ENCODE measurements at regions of chr5 and their contacts with region 1.

Region 1: DNA sequence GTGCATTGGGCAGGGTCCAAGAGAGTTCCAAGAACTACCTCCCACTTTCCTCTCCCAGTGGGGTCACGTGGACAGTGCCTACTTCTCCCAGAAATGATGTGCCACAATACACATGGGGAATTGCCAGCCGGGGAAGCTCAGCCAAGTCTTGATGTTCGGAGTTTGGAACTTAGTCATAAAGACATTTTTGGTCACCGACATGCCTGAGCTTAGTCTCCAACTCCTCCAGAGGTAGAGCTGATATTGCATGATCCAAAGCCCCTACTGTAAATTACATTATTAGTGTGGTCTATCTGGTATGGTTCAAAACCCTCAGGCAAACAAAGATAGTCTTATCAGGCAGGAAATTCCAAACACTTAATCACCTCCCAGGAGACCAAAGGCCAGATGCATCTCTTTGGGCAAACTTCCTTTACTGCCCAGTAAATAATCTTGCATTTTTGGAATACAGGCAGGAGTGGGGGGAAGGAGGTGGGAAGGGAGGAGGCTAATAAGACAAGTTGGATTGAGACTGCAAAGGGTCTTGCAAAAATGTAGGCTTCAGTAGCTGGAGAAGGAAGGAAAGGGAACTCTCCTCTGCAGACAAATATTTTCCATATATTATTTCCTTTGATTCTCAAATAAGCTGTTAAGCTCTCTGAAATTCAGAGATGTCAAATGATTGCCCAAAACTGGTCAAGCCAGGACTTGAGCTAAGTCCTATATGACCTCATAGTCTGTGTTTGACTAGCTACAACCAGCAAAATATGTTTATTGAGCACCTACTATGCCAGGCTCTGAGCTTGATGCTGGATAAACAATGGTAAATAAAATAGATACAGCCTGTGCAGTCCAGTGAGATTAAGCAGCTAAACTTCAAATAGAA is 99.4 kb downstream of the DRD1 start:
- DNase-seq: peak in 1 of 2 donors; percentile 72
- ATAC-seq: no peak
- H3K4me3 ChIP-seq: no peak overlapping the region
- H3K27ac ChIP-seq: no peak overlapping the region
- H3K4me1 ChIP-seq: peaks cover 0 to 4% of the 10 kb centered on the region in 2 donors
- H3K27me3 ChIP-seq: no peaks in the 10 kb centered on the region

Region 2: GRCh38 chr5:175059687-175060211 is 284.8 kb before region 1 on chr5:
- intact Hi-C with region 1: loop called in 1 of 2 experiments (anchors 10 kb)
- DNase-seq: peak; percentile 76 to 89
- ATAC-seq: peak; percentile 63
- H3K4me3 ChIP-seq: peak overlapping the region; percentile 2 to 40
- H3K27ac ChIP-seq: no peak overlapping the region
- H3K4me1 ChIP-seq: no peaks in the 10 kb centered on the region
- H3K27me3 ChIP-seq: no peaks in the 10 kb centered on the region

Measured in aorta (tissue), 5 donors.